A549 (cell line): ENCODE measurements at regions of chr4 and their contacts with region 1.

Region 1: DNA sequence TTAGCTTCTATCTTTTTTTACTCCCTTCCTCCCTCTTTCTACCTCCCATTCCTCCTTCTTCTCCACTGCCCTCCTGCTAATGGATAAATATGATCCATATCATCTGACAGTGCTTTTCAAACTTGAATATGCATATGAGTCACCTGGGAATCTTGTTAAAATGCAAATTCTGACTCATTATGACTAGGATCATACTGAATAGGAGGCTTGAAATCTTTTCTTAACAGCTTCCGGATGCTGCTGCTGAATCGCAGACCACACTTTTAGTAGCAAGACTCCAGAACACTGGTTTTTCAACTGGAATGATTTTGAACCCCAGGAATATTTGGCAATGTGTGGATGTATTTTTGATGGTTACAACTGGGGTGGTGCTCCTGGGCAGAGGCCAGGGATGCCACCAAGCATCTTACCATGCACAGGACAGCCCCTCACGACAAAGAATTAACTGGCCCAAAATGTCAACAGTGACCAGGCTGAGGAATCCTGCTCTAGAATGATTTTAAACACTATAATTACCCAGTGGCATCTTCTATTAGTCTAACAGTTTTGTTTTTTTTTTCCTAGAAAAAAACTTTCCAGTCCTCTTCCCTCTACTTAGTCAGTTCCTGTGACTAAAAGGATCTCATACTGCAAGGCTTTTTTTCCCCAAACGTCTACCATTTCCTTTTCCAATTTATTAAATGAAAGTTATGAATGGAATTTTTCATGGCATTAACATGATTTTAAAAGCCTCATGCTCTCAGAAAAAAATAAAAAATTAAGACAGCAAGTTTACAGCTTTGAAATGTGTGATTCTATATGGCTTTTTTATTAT is 10.6 kb upstream of the PYURF start:
- DNase-seq: no peak
- ATAC-seq: no peak
- H3K4me3 ChIP-seq: no peak overlapping the region
- H3K27ac ChIP-seq: no peak overlapping the region
- H3K4me1 ChIP-seq: no peaks in the 10 kb centered on the region
- CTCF ChIP-seq: no peak
- EP300 ChIP-seq: no peak
- POLR2A ChIP-seq: no peak
- RAD21 ChIP-seq: no peak

Region 2: DNA sequence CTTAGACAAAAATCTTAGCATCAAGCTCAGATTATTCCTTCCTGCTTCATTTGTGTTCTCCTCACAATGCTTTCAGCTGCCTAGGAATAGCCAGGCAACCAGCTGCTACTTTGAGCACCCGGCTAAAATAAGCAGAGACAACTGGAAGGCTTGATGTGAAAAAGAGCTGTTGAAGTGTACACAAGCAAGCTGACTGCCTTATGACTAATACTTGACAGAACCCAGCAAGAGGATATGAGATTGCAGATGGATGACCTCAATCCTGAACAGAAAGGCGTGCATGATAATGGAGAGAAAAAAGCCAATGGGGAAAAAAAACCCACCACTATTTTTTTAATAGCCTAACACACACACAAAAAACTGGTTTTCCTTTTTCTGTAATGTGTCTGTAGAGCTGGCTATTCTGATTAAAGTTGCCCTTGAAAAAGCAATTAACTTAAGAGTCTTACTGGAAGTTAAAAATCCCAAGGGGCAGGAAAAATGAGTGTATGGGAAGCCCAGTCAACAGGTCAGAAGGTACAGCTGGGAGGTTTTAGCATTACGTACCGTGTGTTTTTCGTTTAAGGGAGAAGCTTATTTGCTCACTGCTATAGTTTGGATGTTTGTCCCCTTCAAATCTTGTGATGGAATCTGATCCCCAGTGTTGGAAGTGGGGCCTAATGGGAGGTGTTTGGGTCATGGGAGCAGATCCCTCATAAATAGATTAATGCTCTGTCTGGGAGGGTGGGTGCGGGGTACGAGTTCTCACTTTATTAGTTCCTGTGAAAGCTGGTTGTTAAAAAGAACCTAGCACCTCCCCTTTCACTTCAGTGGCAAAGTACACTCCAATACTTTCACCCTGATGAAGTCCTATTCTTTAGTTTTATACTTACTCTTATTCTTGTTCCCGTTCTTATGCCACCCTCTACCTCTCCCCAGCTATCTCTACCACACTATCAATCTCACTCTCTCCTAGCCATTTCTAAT is 192.6 kb before region 1 on chr4:
- CTCF ChIA-PET with region 1: no interaction called
- POLR2A ChIA-PET with region 1: no interaction called
- DNase-seq: peak; percentile 41 to 57
- ATAC-seq: peak; percentile 91 to 92
- H3K4me3 ChIP-seq: no peak overlapping the region
- H3K27ac ChIP-seq: peak overlapping the region in 1 of 2 experiments; percentile 34; a peak in 2 of 6 replicates
- H3K4me1 ChIP-seq: peaks cover 12% of the 10 kb centered on the region
- CTCF ChIP-seq: no peak
- EP300 ChIP-seq: no peak
- POLR2A ChIP-seq: no peak
- RAD21 ChIP-seq: no peak

Region 3: DNA sequence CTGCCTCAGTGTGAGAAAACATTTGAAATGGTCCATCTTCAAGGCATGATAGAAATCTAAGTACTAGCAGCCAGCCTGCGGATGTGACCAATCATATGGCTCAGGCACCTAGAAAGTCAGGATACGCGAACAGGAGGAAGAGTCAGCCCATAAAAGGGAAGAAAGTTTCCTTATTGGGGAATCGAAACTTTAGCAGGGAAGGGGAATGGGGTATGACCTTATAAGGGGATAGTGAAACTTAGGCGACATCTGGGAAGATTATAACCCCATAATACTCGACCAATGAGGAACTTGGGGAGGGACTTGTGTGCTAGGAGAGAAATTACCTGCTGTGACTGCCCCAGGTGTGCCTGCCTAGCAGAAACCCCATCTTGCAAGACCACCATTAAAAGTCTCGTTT is 15.7 kb after region 1 on chr4:
- CTCF ChIA-PET with region 1: interaction called, 11 read pairs
- POLR2A ChIA-PET with region 1: no interaction called
- DNase-seq: no peak
- ATAC-seq: no peak
- H3K4me3 ChIP-seq: no peak overlapping the region
- H3K27ac ChIP-seq: no peak overlapping the region
- H3K4me1 ChIP-seq: no peaks in the 10 kb centered on the region
- CTCF ChIP-seq: no peak
- EP300 ChIP-seq: no peak
- POLR2A ChIP-seq: no peak
- RAD21 ChIP-seq: no peak

Region 4: DNA sequence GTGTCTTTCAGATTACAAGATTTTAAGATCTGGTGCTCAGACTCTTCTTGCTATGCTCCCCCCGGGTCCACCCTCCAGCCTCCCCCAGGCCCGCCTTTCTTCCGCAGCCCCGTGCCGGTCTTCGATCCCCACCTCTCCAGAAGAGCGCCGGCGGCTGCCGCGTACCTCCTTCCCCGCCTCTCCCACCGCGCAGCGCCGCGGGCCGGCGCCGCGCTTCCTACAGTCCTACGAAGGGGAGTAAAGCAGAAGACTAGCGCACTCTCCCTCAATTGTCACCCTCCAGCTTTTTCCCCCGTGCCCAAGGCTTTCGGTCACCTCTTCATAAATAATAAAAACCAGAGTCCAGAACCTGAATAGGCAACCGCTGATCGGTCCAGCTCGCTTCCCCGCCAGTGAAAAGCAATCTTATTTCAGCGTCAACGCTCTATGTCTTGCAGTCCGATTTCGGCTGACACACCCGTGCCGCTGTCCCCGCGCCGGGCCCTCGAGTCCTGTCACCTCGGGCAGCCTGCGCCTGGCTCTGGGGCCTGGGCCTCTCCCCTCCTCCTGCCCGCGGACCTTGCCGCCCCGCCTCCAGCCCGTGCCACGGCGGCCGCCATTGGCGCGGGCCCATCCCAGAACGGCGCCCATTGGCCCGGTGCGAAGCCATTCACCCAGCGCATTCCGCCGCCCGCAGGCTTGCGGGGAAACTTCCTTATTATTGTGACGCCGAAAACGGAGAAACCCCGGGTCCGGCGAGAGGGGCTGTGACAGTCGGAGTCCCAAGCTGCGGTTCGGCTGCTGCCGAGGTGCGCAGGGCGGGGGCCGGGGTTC is 57.8 kb after region 1 on chr4 and contains the start of gene HERC3:
- CTCF ChIA-PET with region 1: interaction called, 12 read pairs
- POLR2A ChIA-PET with region 1: no interaction called
- DNase-seq: peak; percentile 58 to 80
- ATAC-seq: peak; percentile 97 to 99
- H3K4me3 ChIP-seq: peak within 1 kb of the TSS; percentile 81
- H3K27ac ChIP-seq: peak within 1 kb of the TSS; percentile 72 to 83
- H3K4me1 ChIP-seq: peaks cover 4% of the 10 kb centered on the region; the same call in 1 of the 3 replicates
- CTCF ChIP-seq: no peak
- EP300 ChIP-seq: no peak
- POLR2A ChIP-seq: no peak
- RAD21 ChIP-seq: no peak
- polyA plus RNA-seq, gene HERC3: 4.9 and 6.2 TPM in 2 replicates

Region 5: GRCh38 chr4:88765729-88766128 is 231.6 kb after region 1 on chr4:
- CTCF ChIA-PET with region 1: no interaction called
- POLR2A ChIA-PET with region 1: no interaction called
- DNase-seq: peak; percentile 15 to 23
- ATAC-seq: peak; percentile 84 to 87
- H3K4me3 ChIP-seq: no peak overlapping the region
- H3K27ac ChIP-seq: no peak overlapping the region
- H3K4me1 ChIP-seq: peaks cover 27% of the 10 kb centered on the region
- CTCF ChIP-seq: no peak
- EP300 ChIP-seq: no peak
- POLR2A ChIP-seq: no peak
- RAD21 ChIP-seq: no peak